ENCODE measurements at regions of chr19 and their contacts with region 1.

Region 1: DNA sequence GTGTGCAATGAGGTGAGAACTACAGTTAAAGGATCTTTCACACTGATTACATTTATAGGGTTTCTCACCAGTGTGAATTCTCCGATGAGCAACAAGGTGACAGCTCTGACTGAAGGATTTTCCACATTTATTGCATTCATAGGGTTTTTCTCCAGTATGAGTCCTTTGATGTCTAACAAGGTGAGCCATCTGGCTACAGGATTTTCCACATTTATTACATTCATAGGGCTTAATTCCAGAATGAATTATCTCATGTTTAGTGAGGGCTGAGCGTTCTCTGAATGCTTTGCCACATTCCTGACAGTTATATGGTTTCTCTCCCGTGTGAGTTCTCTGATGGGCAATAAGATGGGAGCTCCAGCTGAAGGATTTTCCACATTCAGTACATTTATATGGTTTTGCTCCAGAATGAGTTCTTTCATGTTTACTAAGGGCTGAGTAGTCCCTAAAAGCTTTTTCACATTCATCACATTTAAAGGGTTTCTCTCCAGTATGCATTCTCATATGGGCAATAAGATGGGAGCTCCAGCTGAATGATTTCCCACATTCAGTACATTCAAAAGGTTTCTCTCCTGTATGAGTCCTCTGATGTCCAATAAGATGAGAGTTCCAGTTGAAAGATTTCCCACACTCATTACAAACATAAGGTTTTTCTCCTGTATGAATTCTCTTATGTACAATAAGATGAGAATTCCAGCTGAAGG is 4.4 kb upstream of the C19orf18 start:
- DNase-seq: no peak
- ATAC-seq: no peak
- H3K4me3 ChIP-seq: no peak overlapping the region
- H3K27ac ChIP-seq: no peak overlapping the region
- H3K4me1 ChIP-seq: no peaks in the 10 kb centered on the region
- H3K27me3 ChIP-seq: no peaks in the 10 kb centered on the region
- CTCF ChIP-seq: no peak

Region 2: DNA sequence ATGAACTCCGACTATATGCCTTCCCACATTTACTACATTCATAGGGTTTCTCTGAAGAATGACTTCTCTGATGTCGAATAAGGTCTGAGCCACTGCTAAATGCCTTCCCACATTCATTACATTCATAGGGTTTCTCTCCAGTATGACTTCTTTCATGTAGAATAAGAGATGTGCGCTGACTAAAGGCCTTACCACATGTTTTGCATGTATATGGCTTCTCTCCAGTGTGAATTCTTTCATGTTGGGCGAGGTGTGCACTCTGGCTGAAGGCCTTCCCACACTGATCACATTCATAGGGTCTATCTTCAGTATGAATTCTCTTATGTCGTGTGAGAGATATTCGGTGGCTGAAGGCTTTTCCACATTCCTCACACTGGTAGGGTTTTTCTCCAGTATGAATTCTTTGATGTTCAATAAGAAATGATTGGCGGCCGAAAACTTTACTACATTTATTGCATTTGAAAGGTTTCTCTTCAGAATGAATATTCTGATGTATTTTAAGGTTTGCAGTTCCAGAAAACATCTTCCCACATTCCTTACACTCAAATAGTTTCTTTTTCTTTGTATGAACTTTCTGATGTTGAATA is 1537.4 kb before region 1 on chr19:
- intact Hi-C with region 1: loop called in 1 of 10 experiments (anchors 10 kb)
- DNase-seq: no peak
- ATAC-seq: no peak
- H3K4me3 ChIP-seq: no peak overlapping the region
- H3K27ac ChIP-seq: no peak overlapping the region
- H3K4me1 ChIP-seq: no peaks in the 10 kb centered on the region
- H3K27me3 ChIP-seq: no peaks in the 10 kb centered on the region
- CTCF ChIP-seq: no peak

Region 3: GRCh38 chr19:57786291-57786690 is 192.4 kb before region 1 on chr19:
- intact Hi-C with region 1: no loop called
- DNase-seq: no peak
- ATAC-seq: peak in 2 of 8 donors; percentile 38 to 60
- H3K4me3 ChIP-seq: no peak overlapping the region
- H3K27ac ChIP-seq: no peak overlapping the region
- H3K4me1 ChIP-seq: no peaks in the 10 kb centered on the region
- H3K27me3 ChIP-seq: no peaks in the 10 kb centered on the region
- CTCF ChIP-seq: no peak

Region 4: DNA sequence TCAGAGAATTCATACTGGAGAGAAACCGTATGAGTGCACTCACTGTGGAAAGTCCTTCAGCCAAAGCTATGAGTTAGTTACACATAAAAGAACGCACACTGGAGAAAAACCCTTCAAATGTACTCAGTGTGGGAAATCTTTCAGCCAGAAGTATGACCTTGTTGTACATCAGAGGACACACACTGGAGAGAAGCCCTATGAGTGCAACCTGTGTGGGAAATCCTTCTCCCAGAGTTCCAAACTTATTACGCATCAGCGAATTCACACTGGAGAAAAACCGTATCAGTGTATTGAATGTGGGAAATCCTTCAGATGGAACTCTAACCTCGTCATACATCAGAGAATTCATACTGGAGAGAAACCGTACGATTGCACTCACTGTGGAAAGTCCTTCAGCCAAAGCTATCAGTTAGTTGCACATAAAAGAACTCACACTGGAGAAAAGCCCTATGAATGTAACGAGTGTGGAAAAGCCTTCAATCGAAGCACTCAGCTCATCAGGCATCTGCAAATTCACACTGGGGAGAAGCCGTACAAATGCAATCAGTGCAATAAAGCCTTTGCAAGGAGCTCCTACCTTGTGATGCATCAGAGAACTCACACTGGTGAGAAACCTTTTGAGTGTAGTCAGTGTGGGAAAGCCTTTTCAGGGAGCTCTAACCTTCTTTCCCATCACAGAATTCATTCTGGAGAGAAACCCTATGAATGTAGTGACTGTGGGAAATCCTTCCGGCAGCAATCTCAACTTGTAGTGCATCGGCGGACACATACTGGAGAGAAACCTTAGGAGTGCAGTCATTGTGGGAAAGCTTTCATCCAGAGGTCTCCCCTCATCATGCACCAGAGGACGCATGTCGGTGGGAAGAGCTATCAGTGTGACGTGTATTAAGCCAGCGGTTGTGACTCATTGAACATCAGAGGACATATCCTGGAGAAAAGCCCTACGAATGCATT is 283.5 kb after region 1 on chr19:
- intact Hi-C with region 1: loop called in 1 of 10 experiments (anchors 10 kb)
- DNase-seq: no peak
- ATAC-seq: no peak
- H3K4me3 ChIP-seq: no peak overlapping the region
- H3K27ac ChIP-seq: no peak overlapping the region
- H3K4me1 ChIP-seq: no peaks in the 10 kb centered on the region
- H3K27me3 ChIP-seq: no peaks in the 10 kb centered on the region
- CTCF ChIP-seq: no peak

Measured in heart right ventricle (tissue), 16 donors.